ENCODE measurements at regions of chr12 and their contacts with region 1.

Region 1: GRCh38 chr12:8823565-8824300 is 1.3 kb downstream of the A2ML1 start:
- DNase-seq: peak; percentile 79
- ATAC-seq: peak; percentile 65
- H3K4me3 Mint-ChIP-seq: peak overlapping the region; percentile 64
- H3K27ac Mint-ChIP-seq: peak overlapping the region; percentile 90
- H3K4me1 Mint-ChIP-seq: peaks cover 60% of the 10 kb centered on the region
- H3K27me3 Mint-ChIP-seq: no peaks in the 10 kb centered on the region; the same call in 1 of the 2 replicates
- CTCF ChIP-seq: peak; percentile 76

Region 2: DNA sequence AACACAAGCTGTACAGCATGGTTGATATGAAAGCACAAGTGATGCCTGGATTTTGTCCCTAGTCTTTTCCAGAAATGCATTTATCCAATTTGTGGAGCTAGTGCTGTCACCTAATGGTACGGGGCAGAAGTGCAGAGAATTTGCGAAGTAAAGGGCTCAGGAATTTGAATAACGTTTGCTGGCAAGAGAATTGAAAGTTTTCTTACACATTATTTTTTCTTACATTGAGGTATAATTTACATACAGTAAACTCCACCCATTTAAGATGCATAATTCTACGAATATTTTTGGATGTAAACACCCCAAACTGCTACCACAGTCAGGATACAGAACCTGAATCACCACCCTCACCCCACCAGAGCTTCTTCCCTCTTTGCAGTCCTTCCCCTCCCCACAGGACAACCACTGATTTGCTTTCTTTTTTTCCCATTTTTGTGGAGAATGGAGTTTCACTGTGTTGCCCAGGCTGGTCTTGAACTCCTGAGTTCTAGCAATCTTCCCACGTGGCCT is 214.6 kb before region 1 on chr12:
- CTCF ChIA-PET with region 1: interaction called, 12 read pairs
- POLR2A ChIA-PET with region 1: no interaction called
- DNase-seq: peak; percentile 33
- ATAC-seq: peak; percentile 61
- H3K4me3 Mint-ChIP-seq: no peak overlapping the region
- H3K27ac Mint-ChIP-seq: no peak overlapping the region
- H3K4me1 Mint-ChIP-seq: peaks cover 34% of the 10 kb centered on the region
- H3K27me3 Mint-ChIP-seq: peaks cover 6% of the 10 kb centered on the region
- CTCF ChIP-seq: peak; percentile 37; the same call in 1 of the 2 replicates

Region 3: DNA sequence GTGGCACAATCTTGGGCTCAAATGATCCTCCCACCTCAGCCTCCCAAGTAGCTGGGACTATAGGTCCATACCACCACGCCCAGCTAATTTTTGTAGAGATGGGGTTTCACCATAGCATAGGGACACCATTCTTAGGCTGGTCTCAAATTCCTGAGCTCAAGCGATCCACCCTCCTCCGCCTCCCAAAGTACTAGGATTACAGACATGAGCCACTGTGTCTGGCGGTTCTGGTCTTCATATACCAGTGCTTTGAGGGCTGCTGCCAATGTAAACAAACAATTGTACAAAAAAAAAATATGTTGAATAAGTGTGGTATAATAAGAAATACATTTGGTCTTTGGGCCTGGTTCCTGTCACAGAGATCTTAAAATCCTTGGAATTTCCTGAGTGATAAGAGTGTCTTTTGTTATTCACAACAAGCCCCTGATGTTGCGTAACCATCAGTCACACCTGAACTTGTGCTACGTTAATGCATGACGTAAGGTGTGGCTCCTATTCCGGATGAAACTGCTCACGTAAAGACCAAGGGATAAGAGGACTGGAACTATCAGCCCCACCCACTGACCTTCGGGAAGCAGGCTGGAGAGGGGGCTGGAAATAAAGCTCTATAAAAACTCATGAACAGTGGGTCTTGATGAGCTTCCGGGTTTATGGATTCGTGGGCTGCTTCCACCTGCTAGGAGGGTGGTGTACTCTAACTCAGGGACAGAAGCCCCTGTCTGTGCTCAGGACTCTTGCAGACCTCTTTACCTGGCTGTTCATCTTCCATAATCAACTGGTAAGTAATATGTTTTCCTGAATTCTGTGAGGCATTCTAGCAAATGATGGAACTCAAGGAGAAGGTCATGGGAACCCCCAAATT is 142.5 kb before region 1 on chr12:
- CTCF ChIA-PET with region 1: interaction called, 65 read pairs
- POLR2A ChIA-PET with region 1: interaction called, 6 read pairs
- DNase-seq: no peak
- ATAC-seq: peak; percentile 55
- H3K4me3 Mint-ChIP-seq: peak overlapping the region; percentile 64
- H3K27ac Mint-ChIP-seq: peak overlapping the region; percentile 93
- H3K4me1 Mint-ChIP-seq: peaks cover 30% of the 10 kb centered on the region
- H3K27me3 Mint-ChIP-seq: no peaks in the 10 kb centered on the region
- CTCF ChIP-seq: no peak

Region 4: DNA sequence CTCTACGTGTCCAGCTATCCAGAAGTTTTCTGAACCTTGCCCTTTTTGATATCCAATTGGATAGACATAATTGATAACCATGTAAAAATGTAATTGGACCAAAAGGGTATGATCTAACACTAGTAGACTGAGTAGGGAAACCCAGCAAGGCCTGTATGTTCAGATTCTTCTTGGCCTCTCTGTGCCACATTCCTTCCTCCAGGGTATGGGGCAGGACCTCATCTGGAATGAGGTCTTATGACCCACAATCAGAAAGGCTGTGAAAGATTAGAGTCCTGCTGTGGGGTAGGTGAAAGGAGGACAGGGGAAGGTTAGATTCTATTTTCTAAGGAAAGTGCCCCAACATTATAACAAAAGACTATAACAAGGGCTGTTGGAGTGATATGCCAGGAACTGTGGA is 52.7 kb before region 1 on chr12:
- CTCF ChIA-PET with region 1: interaction called, 10 read pairs
- POLR2A ChIA-PET with region 1: no interaction called
- DNase-seq: no peak
- ATAC-seq: no peak
- H3K4me3 Mint-ChIP-seq: no peak overlapping the region
- H3K27ac Mint-ChIP-seq: peak overlapping the region; percentile 14; the same call in 1 of the 2 replicates
- H3K4me1 Mint-ChIP-seq: peaks cover 37% of the 10 kb centered on the region
- H3K27me3 Mint-ChIP-seq: no peaks in the 10 kb centered on the region
- CTCF ChIP-seq: no peak

Region 5: DNA sequence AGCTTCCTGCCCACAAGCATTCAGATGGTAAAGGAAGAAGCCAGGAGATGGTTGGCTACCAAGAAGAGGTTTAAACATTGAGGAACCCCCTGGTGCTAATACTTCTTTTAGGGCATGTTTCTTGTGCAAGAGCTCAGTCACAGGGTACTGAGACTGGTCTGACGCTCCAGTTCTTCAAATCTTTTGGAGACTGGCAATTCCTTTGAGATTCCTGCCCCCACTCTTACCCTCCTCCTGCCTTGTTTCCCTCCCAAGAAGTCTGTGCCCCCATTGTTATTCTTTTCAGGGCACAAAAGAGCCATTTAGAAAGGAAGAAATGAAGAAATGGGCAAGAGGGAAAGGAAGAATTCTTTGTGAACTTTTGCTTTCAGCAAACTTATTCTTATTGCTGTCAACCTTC is 10.5 kb after region 1 on chr12:
- CTCF ChIA-PET with region 1: interaction called, 10 read pairs
- POLR2A ChIA-PET with region 1: interaction called, 3 read pairs
- DNase-seq: no peak
- ATAC-seq: no peak
- H3K4me3 Mint-ChIP-seq: no peak overlapping the region
- H3K27ac Mint-ChIP-seq: peak overlapping the region; percentile 13; the same call in 1 of the 2 replicates
- H3K4me1 Mint-ChIP-seq: peaks cover 65% of the 10 kb centered on the region
- H3K27me3 Mint-ChIP-seq: no peaks in the 10 kb centered on the region
- CTCF ChIP-seq: no peak

Region 6: DNA sequence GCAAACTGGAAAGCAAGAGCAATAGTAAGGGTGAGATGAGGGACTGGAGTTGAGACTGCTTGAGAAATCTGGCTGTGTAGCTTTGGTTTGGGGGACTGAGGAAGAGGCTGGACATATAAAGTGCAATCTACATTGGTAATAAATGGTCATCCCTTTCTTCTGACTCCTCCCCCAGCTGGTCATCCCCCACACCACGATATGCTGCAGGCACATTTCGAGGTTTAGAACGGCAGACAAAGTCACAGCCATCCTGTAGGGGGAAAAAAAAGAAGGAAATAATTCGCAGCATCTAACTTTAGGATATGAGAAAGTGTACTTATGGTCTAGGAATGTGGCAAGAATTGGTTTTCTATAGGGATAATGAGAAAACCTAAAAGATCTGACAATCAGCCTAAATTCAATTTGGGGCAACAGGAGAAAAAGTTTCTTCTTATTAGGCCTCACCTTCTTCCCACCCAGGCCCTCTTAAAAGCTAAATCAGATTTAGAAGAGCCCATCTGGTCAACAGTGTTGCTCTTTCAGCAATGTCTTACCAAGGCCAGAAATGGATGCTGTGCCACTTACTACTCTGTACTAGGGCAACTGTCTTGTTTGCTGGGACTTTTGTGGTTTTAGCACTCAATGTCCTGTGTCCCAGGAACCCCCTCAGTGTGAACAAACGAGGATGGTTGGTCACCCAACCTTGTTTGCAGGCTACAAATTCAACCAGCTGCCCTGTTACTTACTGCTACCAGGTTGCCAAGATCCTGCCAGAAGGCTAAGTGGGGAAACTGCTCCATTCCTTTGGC is 118.2 kb after region 1 on chr12:
- CTCF ChIA-PET with region 1: no interaction called
- POLR2A ChIA-PET with region 1: no interaction called
- DNase-seq: no peak
- ATAC-seq: no peak
- H3K4me3 Mint-ChIP-seq: no peak overlapping the region
- H3K27ac Mint-ChIP-seq: peak overlapping the region; percentile 44
- H3K4me1 Mint-ChIP-seq: peaks cover 6% of the 10 kb centered on the region
- H3K27me3 Mint-ChIP-seq: no peaks in the 10 kb centered on the region
- CTCF ChIP-seq: no peak

Region 7: DNA sequence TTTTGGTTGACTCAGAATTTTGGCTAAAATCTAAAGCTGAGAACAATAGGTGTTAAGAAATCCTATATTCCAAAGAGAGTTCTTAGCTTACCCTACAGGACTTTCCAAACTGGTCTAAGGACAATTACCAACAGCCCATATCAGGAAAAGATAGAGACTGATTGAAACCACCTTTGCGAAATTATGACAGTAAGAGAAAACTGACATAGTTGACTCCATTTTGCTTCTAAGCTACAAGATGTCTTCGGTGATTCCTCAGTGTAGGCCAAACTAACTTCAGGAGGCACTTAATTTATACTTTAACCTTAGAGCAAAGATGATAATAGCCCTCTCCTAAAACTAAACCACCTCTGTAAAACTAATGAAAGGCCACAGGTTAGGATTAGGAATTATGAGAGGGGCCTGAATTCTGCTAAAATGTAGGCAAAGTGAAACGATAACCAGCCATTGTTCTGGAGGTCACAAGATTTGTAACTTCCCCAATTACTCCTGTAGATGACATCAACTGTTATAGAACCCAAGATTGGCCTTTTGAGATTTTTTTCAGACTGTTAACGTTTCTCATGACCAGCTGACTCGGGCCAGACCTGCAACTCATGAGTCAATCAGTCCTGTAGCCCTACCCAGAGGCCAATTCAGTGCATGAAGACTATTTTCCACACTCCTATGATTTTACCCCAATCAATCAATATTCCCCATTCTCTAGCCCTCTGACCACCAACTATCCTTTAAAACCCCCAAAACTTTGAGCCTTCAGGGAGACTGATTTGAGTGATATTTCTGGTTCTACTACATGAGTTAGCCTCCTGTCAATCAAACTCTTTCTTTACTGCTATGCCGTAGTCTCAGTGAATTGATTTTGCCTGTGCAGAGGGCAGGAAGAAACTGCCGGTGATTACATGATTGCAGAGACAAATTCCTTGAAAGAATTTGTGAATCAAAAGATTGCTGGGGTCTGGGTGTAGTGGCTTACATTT is 208.8 kb after region 1 on chr12:
- CTCF ChIA-PET with region 1: no interaction called
- POLR2A ChIA-PET with region 1: no interaction called
- DNase-seq: no peak
- ATAC-seq: no peak
- H3K4me3 Mint-ChIP-seq: no peak overlapping the region
- H3K27ac Mint-ChIP-seq: no peak overlapping the region
- H3K4me1 Mint-ChIP-seq: peaks cover 7% of the 10 kb centered on the region
- H3K27me3 Mint-ChIP-seq: no peaks in the 10 kb centered on the region; the same call in 1 of the 2 replicates
- CTCF ChIP-seq: no peak

Region 8: DNA sequence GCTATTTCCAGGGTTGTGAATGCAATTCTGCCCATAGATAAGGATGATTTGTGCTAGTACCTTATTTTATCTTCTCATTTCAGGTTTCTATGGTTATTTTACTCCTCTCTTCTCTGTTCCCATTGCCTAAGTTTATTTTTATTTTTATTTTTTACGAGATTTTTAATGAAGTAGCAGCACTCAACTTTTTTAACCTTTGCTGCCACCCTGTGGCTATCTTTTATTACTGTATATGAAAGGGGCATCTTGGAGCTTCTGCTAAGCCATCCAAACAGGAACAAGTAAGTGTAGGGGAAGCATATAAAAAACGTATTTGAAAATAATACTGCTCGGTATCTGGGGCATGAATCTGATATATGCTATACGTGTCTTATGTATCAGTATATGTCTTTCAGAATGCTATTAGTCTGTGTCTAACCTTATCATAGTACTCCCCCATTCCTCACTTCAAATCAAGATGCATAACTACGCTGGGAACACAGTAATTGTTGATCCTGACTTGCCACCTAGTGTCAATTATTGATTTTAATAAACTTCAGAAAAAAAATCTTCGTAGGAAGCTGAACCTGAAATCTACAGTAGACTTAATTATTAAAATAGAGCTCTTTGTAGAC is 225.9 kb after region 1 on chr12:
- CTCF ChIA-PET with region 1: interaction called, 14 read pairs
- POLR2A ChIA-PET with region 1: no interaction called
- DNase-seq: no peak
- ATAC-seq: peak; percentile 65; the same call in 1 of the 2 replicates
- H3K4me3 Mint-ChIP-seq: no peak overlapping the region
- H3K27ac Mint-ChIP-seq: no peak overlapping the region
- H3K4me1 Mint-ChIP-seq: peaks cover 7% of the 10 kb centered on the region; the same call in 1 of the 2 replicates
- H3K27me3 Mint-ChIP-seq: no peaks in the 10 kb centered on the region
- CTCF ChIP-seq: peak; percentile 24

Measured in WTC11 (cell line).